Activated CD8-positive, alpha-beta memory T cell treated with anti-CD3 and anti-CD28 coated beads, Interleukin-2, amount 10 ng/mL, durations not matched to agents 7 days and 5 days (primary cell): ENCODE measurements at regions of chr1 and their contacts with region 1.

Region 1: DNA sequence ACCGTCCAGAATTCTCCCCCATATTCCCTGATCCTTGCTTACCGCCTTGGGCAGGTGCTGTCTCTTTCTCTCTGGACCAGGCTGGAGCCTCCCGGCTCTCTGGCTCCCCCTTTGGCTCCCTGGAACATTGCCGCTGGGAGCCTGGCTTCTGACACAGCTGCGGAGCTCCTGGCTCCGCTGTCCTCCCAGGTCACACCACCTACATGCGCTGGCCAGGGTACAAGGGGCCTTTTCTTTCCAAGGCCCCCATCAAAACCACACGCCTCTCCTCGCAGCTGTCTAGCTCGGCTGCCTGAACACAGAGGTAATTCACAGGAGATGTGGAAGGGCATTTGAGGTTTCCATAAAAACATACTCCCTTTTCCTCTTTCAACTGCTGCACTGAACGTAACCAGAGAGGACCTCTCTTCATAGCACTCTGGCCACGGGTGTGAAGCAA is 7.5 kb upstream of the ZNF648 start:
- DNase-seq: no peak
- ATAC-seq: peak; percentile 72
- H3K4me3 Mint-ChIP-seq: no peak overlapping the region
- H3K27ac Mint-ChIP-seq: no peak overlapping the region
- H3K4me1 Mint-ChIP-seq: no peaks in the 10 kb centered on the region
- H3K27me3 Mint-ChIP-seq: peaks cover 25% of the 10 kb centered on the region

Region 2: GRCh38 chr1:182054698-182055326 is 14.2 kb before region 1 on chr1:
- CTCF ChIA-PET with region 1: interaction called, 11 read pairs
- DNase-seq: peak; percentile 71
- ATAC-seq: peak; percentile 71
- H3K4me3 Mint-ChIP-seq: no peak overlapping the region
- H3K27ac Mint-ChIP-seq: no peak overlapping the region
- H3K4me1 Mint-ChIP-seq: peaks cover 9% of the 10 kb centered on the region
- H3K27me3 Mint-ChIP-seq: peaks cover 29% of the 10 kb centered on the region